Naive thymus-derived CD4-positive, alpha-beta T cell (primary cell): ENCODE measurements at regions of chr13 and their contacts with region 1.

Region 1: DNA sequence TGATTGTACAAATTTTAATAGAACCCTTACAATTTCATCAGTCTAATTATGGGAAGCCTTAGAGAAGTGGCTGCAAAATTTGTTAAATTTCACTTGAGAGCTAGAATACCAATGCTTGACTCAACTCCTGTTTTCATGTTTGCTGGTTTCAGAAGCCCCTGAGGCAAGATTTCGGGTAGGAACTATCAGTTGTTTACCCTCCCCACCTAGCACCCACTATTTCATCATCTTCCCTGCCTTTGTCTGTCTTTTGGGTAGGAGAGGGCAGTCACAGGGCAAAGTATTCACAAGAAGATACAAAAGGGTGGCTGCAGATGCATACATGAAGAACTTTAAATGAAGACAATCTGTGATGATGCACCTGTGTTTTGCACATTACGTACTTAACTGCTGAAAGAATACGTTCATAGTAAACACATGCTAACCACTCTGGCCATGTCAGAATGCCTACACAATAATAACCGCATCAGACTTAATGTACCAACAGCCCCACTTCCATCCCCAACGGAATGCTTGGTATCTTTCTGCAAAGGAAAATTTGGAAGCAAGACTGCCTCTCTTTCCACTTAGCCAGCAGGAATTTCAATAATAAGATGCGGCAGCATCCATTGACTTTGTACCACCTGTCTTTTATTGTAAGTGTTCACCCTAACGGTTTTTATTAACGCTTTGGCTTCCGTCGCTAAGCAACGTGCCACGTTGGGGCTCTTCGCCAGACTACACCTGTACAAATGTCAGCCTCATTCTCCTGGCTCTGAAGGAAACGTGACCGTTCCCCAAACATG is 30.4 kb downstream of the TPT1 start:
- DNase-seq: no peak
- ATAC-seq: no peak
- H3K4me3 ChIP-seq: peak overlapping the region; percentile 63
- H3K4me3 Mint-ChIP-seq: peak overlapping the region; percentile 82 to 93 (median 89)
- H3K27ac ChIP-seq: no peak overlapping the region
- H3K27ac Mint-ChIP-seq: peak overlapping the region in 6 of 9 donors; percentile 23 to 53 (median 46)
- H3K4me1 ChIP-seq: peaks cover 4 to 14% of the 10 kb centered on the region in 2 donors
- H3K4me1 Mint-ChIP-seq: peaks cover 11 to 23% (median 20%) of the 10 kb centered on the region in 7 donors
- H3K27me3 ChIP-seq: no peaks in the 10 kb centered on the region
- H3K27me3 Mint-ChIP-seq: peaks cover 0 to 16% (median 4%) of the 10 kb centered on the region in 5 donors

Region 2: DNA sequence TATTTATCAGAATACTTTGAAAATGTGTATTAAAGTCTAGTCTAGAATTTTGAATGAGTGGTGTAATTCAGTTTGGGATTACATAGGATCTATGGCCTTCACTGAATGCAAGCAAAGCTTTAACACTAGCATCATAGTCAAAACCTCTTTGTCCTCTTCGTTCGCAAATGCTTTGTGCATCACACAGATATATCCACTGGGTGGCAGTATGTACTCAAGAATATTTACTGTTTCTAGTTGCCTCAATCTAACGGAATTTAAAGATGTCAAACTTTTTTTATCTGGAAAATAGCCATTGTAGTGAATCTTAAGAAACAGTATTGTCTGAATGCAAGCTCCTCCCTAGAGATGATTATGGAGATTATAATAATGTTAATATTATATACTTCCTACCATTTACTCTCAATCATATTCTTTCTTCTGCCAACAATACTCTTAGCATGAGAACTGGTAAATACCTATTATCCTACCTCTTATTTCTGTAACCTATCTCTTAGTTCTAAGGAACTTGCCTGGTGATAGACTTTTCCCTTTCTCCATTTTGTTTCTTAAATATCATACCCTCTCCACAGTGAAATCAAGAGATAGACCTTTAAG is 1405.0 kb before region 1 on chr13:
- CTCF ChIA-PET with region 1: no interaction called
- POLR2A ChIA-PET with region 1: no interaction called
- intact Hi-C with region 1: loop called in 1 of 2 experiments (anchors 1 kb)
- DNase-seq: peak in 7 of 9 donors; percentile 21 to 61 (median 48)
- ATAC-seq: peak; percentile 85
- H3K4me3 ChIP-seq: no peak overlapping the region
- H3K4me3 Mint-ChIP-seq: no peak overlapping the region
- H3K27ac ChIP-seq: no peak overlapping the region
- H3K27ac Mint-ChIP-seq: no peak overlapping the region
- H3K4me1 ChIP-seq: no peaks in the 10 kb centered on the region
- H3K4me1 Mint-ChIP-seq: peaks cover 0 to 6% (median 3%) of the 10 kb centered on the region in 7 donors
- H3K27me3 ChIP-seq: no peaks in the 10 kb centered on the region
- H3K27me3 Mint-ChIP-seq: peaks cover 13 to 35% (median 18%) of the 10 kb centered on the region in 5 donors

Region 3: DNA sequence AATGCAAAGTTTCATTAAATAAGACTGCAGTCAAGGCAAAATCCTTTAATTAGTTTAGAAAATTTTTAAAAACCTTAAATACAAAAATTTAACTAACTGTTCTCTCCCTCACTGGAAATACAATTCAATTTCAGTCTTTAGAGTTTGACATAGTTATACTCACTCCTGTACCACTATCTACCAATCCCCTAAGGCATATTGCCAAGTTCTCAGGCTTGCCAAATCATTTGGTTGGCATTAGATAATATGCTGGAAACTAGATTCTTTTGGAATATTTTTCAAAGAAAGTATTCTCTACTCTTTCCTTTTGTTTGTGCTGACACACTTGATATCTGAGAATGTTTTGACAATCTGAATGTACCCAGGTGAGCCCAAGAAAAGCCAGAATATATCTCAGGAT is 811.6 kb before region 1 on chr13:
- CTCF ChIA-PET with region 1: no interaction called
- POLR2A ChIA-PET with region 1: no interaction called
- intact Hi-C with region 1: no loop called
- DNase-seq: no peak
- ATAC-seq: no peak
- H3K4me3 ChIP-seq: no peak overlapping the region
- H3K4me3 Mint-ChIP-seq: no peak overlapping the region
- H3K27ac ChIP-seq: no peak overlapping the region
- H3K27ac Mint-ChIP-seq: no peak overlapping the region
- H3K4me1 ChIP-seq: no peaks in the 10 kb centered on the region
- H3K4me1 Mint-ChIP-seq: peaks cover 0 to 5% (median 0%) of the 10 kb centered on the region in 7 donors
- H3K27me3 ChIP-seq: no peaks in the 10 kb centered on the region
- H3K27me3 Mint-ChIP-seq: no peaks in the 10 kb centered on the region

Region 4: GRCh38 chr13:44868397-44868796 is 442.1 kb before region 1 on chr13:
- CTCF ChIA-PET with region 1: no interaction called
- POLR2A ChIA-PET with region 1: no interaction called
- intact Hi-C with region 1: no loop called
- DNase-seq: no peak
- ATAC-seq: no peak
- H3K4me3 ChIP-seq: no peak overlapping the region
- H3K4me3 Mint-ChIP-seq: no peak overlapping the region
- H3K27ac ChIP-seq: no peak overlapping the region
- H3K27ac Mint-ChIP-seq: no peak overlapping the region
- H3K4me1 ChIP-seq: no peaks in the 10 kb centered on the region
- H3K4me1 Mint-ChIP-seq: no peaks in the 10 kb centered on the region
- H3K27me3 ChIP-seq: no peaks in the 10 kb centered on the region
- H3K27me3 Mint-ChIP-seq: peaks cover 0 to 14% (median 2%) of the 10 kb centered on the region in 5 donors

Region 5: DNA sequence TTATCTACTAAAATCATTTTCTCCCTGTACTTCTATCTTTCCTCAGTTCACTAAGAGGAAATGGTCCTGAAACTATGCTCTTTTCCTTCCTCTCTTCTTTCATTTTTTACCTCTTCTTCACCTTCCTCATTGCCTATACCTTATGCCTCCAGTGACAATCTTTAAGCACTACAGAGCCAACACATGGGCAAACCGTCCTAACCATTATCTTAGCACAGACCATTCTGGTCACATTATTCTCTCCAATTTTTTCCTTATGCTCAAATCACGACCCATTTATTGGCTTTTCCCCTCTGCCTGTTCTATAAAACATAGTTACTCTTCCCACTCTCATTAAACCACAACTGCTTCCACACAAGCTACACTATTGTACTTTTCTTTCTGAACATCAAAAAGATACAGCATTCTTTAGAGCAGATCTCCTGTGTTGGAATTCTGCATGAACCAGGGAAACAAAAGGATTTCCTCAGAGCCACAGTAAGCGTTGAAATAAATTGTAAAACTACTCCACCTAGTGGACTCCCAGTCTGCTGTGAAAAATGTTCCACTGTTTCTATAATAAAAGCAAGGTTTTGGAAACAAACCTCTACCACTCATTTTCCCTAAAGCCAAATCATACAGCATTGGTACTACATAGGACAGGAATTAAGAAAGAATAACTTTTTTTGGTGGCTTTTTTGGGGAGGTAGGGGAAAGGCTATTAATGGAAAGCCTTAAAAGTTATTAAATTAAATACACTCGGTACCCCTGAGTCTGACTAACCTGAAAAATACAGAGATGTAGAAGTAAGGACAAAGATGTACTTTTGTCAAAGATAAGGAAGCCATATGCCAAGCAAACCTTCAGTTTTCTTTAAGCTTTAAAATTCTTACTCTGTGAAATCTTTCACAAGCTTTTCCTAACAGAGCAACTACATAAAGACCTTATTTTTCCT is 340.7 kb before region 1 on chr13:
- CTCF ChIA-PET with region 1: interaction called, 4 read pairs
- POLR2A ChIA-PET with region 1: no interaction called
- intact Hi-C with region 1: loop called (anchors 1 kb)
- DNase-seq: peak in 5 of 9 donors; percentile 13 to 27 (median 18)
- ATAC-seq: peak; percentile 51
- H3K4me3 ChIP-seq: no peak overlapping the region
- H3K4me3 Mint-ChIP-seq: no peak overlapping the region
- H3K27ac ChIP-seq: no peak overlapping the region
- H3K27ac Mint-ChIP-seq: no peak overlapping the region
- H3K4me1 ChIP-seq: no peaks in the 10 kb centered on the region
- H3K4me1 Mint-ChIP-seq: no peaks in the 10 kb centered on the region
- H3K27me3 ChIP-seq: no peaks in the 10 kb centered on the region
- H3K27me3 Mint-ChIP-seq: no peaks in the 10 kb centered on the region

Region 6: GRCh38 chr13:45047394-45048310 is 262.9 kb before region 1 on chr13:
- CTCF ChIA-PET with region 1: interaction called, 47 read pairs
- POLR2A ChIA-PET with region 1: no interaction called
- intact Hi-C with region 1: loop called (anchors 1 kb)
- DNase-seq: peak; percentile 44 to 78 (median 68)
- ATAC-seq: peak; percentile 92
- H3K4me3 ChIP-seq: no peak overlapping the region
- H3K4me3 Mint-ChIP-seq: peak overlapping the region; percentile 71 to 87 (median 78)
- H3K27ac ChIP-seq: no peak overlapping the region
- H3K27ac Mint-ChIP-seq: peak overlapping the region in 1 of 9 donors; percentile 2
- H3K4me1 ChIP-seq: peaks cover 0 to 7% of the 10 kb centered on the region in 2 donors
- H3K4me1 Mint-ChIP-seq: peaks cover 4 to 17% (median 7%) of the 10 kb centered on the region in 7 donors
- H3K27me3 ChIP-seq: no peaks in the 10 kb centered on the region
- H3K27me3 Mint-ChIP-seq: peaks cover 3 to 34% (median 16%) of the 10 kb centered on the region in 5 donors

Region 7: GRCh38 chr13:45297456-45298205 is 12.9 kb before region 1 on chr13:
- CTCF ChIA-PET with region 1: interaction called, 17 read pairs
- POLR2A ChIA-PET with region 1: no interaction called
- intact Hi-C with region 1: no loop called
- DNase-seq: peak in 6 of 9 donors; percentile 5 to 55 (median 39)
- ATAC-seq: peak; percentile 69
- H3K4me3 ChIP-seq: no peak overlapping the region
- H3K4me3 Mint-ChIP-seq: peak overlapping the region; percentile 2 to 56 (median 30)
- H3K27ac ChIP-seq: peak overlapping the region; percentile 8
- H3K27ac Mint-ChIP-seq: peak overlapping the region; percentile 69 to 93 (median 83)
- H3K4me1 ChIP-seq: peaks cover 21 to 30% of the 10 kb centered on the region in 2 donors
- H3K4me1 Mint-ChIP-seq: peaks cover 30 to 54% (median 39%) of the 10 kb centered on the region in 7 donors
- H3K27me3 ChIP-seq: no peaks in the 10 kb centered on the region
- H3K27me3 Mint-ChIP-seq: peaks cover 0 to 1% (median 0%) of the 10 kb centered on the region in 5 donors

Region 8: GRCh38 chr13:45340926-45341750 is 30.6 kb after region 1 on chr13 and contains the start of gene TPT1:
- CTCF ChIA-PET with region 1: interaction called, 3 read pairs
- POLR2A ChIA-PET with region 1: interaction called, 3 read pairs
- intact Hi-C with region 1: loop called (anchors 1 to 2 kb)
- DNase-seq: peak; percentile 99 to 100 (median 99)
- ATAC-seq: peak; percentile 91
- H3K4me3 ChIP-seq: peak within 1 kb of the TSS; percentile 94
- H3K4me3 Mint-ChIP-seq: peak within 1 kb of the TSS; percentile 95 to 100 (median 98)
- H3K27ac ChIP-seq: peak within 1 kb of the TSS; percentile 99
- H3K27ac Mint-ChIP-seq: peak within 1 kb of the TSS; percentile 92 to 100 (median 99)
- H3K4me1 ChIP-seq: peaks cover 35 to 43% of the 10 kb centered on the region in 2 donors
- H3K4me1 Mint-ChIP-seq: peaks cover 35 to 70% (median 57%) of the 10 kb centered on the region in 7 donors
- H3K27me3 ChIP-seq: no peaks in the 10 kb centered on the region
- H3K27me3 Mint-ChIP-seq: no peaks in the 10 kb centered on the region
- total RNA-seq, gene TPT1: 4,230 to 13,134 (median 7,796) TPM

Region 9: DNA sequence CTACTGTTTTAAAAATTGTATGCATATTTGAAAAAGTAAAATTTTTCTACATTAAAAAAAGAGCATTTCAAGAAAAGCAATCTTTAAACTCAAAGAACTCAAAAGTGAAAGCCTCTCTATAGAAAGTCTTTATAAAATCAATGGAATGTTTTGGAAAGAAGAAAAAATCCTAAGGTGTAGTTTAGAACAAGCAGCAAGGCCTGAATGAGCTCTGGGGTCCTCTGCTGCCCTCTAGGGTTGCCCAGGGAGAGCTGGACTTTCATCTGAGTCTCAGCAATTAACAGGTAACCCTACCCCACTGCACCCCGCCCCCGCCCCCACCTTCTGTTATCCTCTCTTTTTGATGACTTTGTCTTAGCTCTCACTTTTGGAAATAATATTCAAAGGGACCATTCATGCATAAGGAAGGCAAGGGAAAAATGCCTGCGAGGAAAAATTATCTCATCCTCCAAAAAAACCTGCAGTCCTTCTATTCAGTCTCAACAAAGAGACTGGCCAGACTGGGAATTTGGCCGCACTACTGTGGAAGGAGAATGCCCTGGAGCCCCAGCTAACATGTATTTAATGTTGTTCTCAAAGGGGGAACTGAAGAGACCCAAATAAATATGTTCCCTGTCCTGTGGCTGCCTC is 83.5 kb after region 1 on chr13:
- CTCF ChIA-PET with region 1: interaction called, 4 read pairs
- POLR2A ChIA-PET with region 1: no interaction called
- intact Hi-C with region 1: loop called in 1 of 2 experiments (anchors 1 kb)
- DNase-seq: peak in 1 of 9 donors; percentile 33
- ATAC-seq: peak; percentile 52
- H3K4me3 ChIP-seq: no peak overlapping the region
- H3K4me3 Mint-ChIP-seq: no peak overlapping the region
- H3K27ac ChIP-seq: no peak overlapping the region
- H3K27ac Mint-ChIP-seq: peak overlapping the region in 8 of 9 donors; percentile 16 to 95 (median 72)
- H3K4me1 ChIP-seq: peaks cover 10 to 20% of the 10 kb centered on the region in 2 donors
- H3K4me1 Mint-ChIP-seq: peaks cover 30 to 49% (median 48%) of the 10 kb centered on the region in 7 donors
- H3K27me3 ChIP-seq: no peaks in the 10 kb centered on the region
- H3K27me3 Mint-ChIP-seq: no peaks in the 10 kb centered on the region